Right lobe of liver (tissue), 6 donors: ENCODE measurements at regions of chr19 and their contacts with region 1.

Region 1: GRCh38 chr19:33778089-33778791 is 18.4 kb upstream of the KCTD15 start:
- DNase-seq: peak; percentile 85 to 89 (median 88)
- ATAC-seq: peak; percentile 90 to 98 (median 96)
- H3K4me3 ChIP-seq: no peak overlapping the region
- H3K27ac ChIP-seq: no peak overlapping the region
- H3K4me1 ChIP-seq: no peaks in the 10 kb centered on the region
- H3K27me3 ChIP-seq: no peaks in the 10 kb centered on the region
- CTCF ChIP-seq: peak; percentile 100
- POLR2A ChIP-seq: no peak

Region 2: DNA sequence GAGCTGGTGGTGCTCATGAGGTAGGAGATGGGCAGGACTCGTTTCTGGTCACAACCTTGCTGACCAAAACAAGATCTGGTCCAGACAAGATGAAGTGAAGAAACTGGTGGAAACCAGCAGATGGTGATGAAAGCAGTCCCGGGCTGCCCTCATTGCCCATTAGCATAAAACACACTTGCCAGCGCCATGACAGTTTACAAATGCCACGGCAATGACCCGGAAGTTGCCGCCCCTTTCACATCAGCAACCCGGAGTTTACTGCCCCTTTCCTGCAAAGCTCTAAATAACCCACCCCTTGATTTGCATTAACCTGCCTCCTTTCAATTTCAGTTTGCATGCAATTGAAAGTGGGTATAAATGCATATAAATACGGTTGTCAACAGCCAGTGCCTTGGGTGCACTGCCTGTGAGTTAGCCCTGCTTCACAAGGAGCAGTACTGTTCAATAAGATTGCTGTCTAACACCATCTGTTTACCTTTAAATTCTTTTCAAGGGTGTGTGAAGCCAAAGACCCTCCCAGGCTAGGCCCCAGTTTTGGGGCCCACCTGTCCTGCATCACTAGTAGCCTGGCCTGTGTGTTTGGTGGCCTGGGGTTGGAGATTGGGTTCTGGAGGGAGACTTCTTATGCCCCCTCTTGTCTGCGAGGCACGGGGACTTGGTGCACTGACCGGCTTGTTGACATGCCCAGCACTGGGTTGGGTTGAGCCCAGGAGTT is 117.7 kb before region 1 on chr19:
- intact Hi-C with region 1: no loop called
- DNase-seq: peak in 1 of 3 donors; percentile 21
- ATAC-seq: no peak
- H3K4me3 ChIP-seq: no peak overlapping the region
- H3K27ac ChIP-seq: no peak overlapping the region
- H3K4me1 ChIP-seq: no peaks in the 10 kb centered on the region
- H3K27me3 ChIP-seq: no peaks in the 10 kb centered on the region
- CTCF ChIP-seq: no peak
- POLR2A ChIP-seq: no peak

Region 3: DNA sequence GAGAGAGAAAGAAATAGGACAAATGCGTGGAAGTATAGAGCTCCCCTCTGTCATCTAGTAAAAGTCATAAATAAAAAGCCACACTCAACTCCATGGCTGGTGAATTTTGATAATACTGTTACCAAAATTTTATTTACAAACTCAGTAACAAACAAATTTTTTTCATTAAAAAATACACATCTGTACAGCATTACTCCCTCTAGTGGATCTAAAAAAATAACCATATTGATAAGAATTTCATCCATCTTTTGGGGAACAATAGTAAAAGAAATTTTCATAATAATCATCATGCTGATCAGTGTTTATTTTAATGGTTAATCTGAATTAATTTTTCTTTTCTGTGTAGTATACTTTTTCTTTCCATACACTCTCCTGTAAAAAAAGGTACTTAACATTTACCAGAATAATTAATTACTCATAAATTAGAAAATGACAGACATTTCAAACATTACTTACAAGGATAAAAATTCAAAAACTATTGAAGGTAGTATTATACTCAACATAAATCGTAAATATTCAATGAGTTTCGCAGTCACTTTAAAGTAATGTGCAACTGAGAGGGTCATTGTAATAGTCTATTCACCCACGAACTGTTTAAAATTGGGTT is 220.6 kb after region 1 on chr19:
- intact Hi-C with region 1: loop called in 1 of 2 experiments (anchors 10 kb)
- DNase-seq: no peak
- ATAC-seq: no peak
- H3K4me3 ChIP-seq: no peak overlapping the region
- H3K27ac ChIP-seq: no peak overlapping the region
- H3K4me1 ChIP-seq: no peaks in the 10 kb centered on the region
- H3K27me3 ChIP-seq: no peaks in the 10 kb centered on the region
- CTCF ChIP-seq: peak; percentile 43 to 59 (median 52)
- POLR2A ChIP-seq: no peak

Region 4: DNA sequence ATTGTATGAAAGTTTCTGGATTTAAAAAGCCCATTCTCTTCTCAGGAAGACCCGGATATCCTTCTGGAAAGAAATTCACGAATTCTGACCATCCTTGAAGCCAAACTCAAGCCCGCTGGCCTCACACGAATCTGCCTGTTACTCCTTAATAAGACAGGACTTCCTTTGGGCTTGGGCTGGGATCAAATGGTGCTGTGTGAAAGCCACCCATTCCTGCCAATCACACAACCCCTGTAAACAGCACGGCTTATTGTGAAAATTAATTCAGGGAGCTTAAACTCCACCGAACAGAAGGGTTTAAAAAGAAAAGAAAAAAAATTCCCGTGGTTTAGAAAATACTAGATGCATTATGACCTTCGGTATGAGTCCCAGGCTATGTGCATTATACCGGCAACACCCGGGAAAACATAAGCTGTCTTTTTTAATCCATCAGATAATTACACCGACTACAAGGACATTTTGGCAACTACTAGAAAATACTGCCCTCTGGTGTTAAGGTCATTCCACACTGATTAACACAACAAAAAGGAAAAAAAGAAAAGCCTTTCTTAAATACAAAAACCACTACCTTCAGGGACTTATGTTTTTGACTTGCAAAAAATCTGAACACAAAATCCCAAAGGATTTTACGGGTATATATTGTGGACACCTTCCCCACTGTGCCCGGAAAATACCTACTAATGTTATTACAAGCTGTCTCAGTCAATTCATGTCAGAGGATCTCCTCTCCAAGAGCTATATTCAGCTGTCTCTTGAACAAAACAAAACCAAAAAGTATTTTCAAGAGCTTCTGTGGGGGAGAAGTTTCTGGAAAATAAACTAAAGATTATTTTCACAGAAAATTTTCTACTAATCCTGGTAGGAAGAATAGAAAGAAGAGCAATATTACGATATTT is 318.0 kb after region 1 on chr19:
- intact Hi-C with region 1: loop called (anchors 5 to 10 kb)
- DNase-seq: no peak
- ATAC-seq: peak; percentile 65 to 69 (median 66)
- H3K4me3 ChIP-seq: no peak overlapping the region
- H3K27ac ChIP-seq: no peak overlapping the region
- H3K4me1 ChIP-seq: no peaks in the 10 kb centered on the region
- H3K27me3 ChIP-seq: no peaks in the 10 kb centered on the region
- CTCF ChIP-seq: peak; percentile 64 to 73 (median 67)
- POLR2A ChIP-seq: no peak